ENCODE measurements at regions of chr12 and their contacts with region 1.

Region 1: DNA sequence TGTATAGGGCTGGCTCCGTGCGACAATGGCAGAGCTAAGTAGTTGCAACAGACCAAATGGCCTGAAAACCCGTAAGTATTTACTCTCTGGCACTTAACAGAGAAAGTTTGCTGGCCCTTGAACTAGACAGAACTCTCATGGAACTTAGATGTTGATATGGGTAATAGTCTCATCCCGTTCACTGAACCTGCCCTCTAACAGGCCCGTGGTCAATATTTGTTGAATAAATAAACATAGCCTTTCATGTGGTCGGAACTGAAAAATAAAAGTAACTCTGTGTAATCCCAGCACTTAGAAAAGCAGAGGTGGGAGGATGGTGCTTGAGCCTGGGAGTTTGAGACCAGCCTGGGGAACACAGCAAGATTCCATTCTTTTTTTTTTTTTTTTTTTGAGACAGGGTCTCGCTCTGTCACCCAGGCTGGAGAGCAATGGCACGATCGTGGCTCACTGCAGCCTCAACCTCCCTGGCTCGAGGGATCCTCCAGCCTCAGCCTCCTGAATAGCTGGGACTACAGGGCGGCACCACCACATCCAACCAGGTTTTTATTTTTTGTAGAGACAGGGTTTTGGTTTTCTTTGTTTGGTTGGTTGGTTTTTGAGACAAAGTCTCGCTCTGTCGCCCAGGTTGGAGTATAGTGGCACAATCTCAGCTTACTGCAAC is 29.7 kb downstream of the KDM2B start:
- DNase-seq: no peak
- ATAC-seq: no peak

Region 2: GRCh38 chr12:121626087-121626852 is 75.2 kb after region 1 on chr12 and contains the start of gene ORAI1:
- intact Hi-C with region 1: loop called in 1 of 2 experiments (anchors 5 kb)
- DNase-seq: peak; percentile 96 to 99
- ATAC-seq: peak; percentile 83
- total RNA-seq, gene ORAI1: 13.7 to 15.5 TPM

Region 3: GRCh38 chr12:121673003-121673511 is 122.0 kb after region 1 on chr12:
- intact Hi-C with region 1: loop called in 1 of 2 experiments (anchors 10 kb)
- DNase-seq: peak; percentile 40 to 54
- ATAC-seq: peak; percentile 60

Region 4: GRCh38 chr12:121678716-121679580 is 127.8 kb after region 1 on chr12:
- intact Hi-C with region 1: loop called (anchors 5 to 10 kb)
- DNase-seq: no peak
- ATAC-seq: no peak

Region 5: GRCh38 chr12:121697098-121697698 is 146.1 kb after region 1 on chr12:
- intact Hi-C with region 1: no loop called
- DNase-seq: no peak
- ATAC-seq: peak; percentile 33

Region 6: DNA sequence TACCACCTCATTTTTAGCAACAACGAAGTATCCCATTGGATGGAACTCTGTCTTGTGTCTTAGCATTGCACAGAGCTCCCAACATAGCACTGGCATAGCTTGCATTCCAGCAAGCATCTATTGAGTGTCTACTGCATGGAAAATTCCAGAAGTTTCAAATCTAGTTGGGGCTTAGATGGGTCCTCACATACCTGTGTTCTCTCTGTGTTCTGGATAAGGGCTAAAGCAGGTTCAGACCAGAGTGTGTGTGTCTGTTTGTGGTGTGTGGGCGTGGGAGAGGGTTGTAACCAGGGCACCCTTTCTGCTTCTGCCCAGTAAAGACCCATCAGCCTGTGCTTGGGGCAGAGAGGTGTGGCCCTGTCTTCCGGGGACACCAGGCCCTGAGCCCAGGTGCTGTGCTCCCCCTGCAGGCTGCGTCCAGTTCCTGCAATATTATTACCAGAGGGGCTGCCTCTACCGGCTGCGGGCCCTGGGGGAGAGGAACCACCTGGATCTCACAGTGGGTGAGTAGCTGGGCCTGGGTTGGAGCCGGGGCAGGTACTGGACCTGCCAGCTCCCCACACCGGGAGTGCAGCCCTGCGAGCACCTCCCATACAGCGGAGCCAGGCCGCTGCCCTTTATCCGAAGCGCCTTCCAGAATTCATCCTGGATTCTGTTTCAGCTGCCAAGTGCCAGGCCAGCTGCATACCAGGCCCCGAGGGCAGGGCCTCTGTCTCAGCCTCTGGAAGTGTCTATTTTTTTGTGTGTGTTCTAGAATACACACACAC is 222.1 kb after region 1 on chr12:
- intact Hi-C with region 1: no loop called
- DNase-seq: peak; percentile 66 to 81
- ATAC-seq: peak; percentile 72

Region 7: DNA sequence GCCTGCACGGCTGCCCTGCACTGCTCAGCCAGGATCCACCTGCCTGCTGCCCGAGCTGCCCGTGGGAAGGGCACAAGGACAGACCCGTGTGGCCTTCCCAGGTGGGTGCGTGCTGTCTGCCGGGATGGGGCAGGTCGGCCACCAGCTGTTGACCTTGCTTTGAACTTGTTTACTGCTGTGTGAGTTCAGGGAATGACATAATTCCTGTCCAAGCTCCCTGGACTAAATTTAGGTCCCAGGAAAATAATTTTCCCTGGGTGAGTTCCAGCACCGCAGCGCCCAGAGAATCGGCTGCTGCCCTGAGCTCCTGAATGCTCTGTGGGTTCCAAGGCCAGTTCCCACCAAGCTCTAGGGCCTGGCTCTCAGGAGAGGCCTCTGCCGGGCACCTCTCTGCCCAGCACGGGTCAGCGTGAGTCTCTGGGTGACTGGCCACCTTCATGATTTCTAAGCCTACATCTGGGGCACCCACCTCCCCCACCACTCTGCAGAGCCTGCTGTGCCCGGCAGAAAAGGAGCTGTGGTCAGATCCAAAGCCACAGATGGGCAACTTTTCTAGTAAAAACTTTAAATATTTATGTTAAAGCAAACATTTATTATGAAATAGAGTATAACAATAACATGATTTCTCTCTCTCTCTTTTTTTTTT is 500.2 kb after region 1 on chr12:
- intact Hi-C with region 1: no loop called
- DNase-seq: no peak
- ATAC-seq: peak; percentile 6

Region 8: DNA sequence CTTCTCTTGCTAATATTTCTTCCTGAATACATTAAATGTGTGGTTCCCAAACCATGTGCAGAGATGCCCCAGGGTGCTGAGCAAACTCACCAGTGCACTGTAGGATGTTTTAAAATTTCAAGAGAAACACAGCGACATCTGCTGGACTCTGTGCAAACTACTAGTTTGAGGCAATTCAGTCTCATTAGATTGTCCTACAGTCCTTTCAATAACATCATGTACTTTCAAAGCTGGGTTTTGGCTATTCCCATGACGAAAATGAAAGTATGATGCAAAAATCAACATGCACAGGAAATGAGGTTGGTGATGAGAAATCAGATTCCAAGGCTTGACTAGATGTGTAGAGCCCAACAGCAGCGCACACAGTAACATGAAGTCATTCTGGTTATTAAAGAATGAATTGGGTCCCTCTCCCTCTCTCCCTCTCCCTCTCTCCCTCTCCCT is 805.1 kb after region 1 on chr12:
- intact Hi-C with region 1: no loop called
- DNase-seq: peak in 1 of 2 donors; percentile 45
- ATAC-seq: peak; percentile 81

Measured in left colon (tissue), 2 donors.